CD8-positive, alpha-beta T cell (primary cell): ENCODE measurements at regions of chr2 and their contacts with region 1.

Region 1: GRCh38 chr2:201182650-201183364 is at the start of gene CASP10:
- DNase-seq: peak in 5 of 9 experiments; percentile 17 to 89 (median 23)
- ATAC-seq: peak; percentile 87
- H3K4me3 ChIP-seq: peak within 1 kb of the TSS; percentile 57 to 60
- H3K4me3 Mint-ChIP-seq: peak within 1 kb of the TSS; percentile 94
- H3K27ac ChIP-seq: peak within 1 kb of the TSS; percentile 58 to 78
- H3K27ac Mint-ChIP-seq: peak within 1 kb of the TSS; percentile 95
- H3K4me1 ChIP-seq: peaks cover 25% of the 10 kb centered on the region
- H3K4me1 Mint-ChIP-seq: peaks cover 45% of the 10 kb centered on the region
- H3K27me3 ChIP-seq: no peaks in the 10 kb centered on the region
- H3K27me3 Mint-ChIP-seq: no peaks in the 10 kb centered on the region
- CTCF ChIP-seq: peak; percentile 48
- total RNA-seq, gene CASP10: 9.8 to 10.4 TPM

Region 2: DNA sequence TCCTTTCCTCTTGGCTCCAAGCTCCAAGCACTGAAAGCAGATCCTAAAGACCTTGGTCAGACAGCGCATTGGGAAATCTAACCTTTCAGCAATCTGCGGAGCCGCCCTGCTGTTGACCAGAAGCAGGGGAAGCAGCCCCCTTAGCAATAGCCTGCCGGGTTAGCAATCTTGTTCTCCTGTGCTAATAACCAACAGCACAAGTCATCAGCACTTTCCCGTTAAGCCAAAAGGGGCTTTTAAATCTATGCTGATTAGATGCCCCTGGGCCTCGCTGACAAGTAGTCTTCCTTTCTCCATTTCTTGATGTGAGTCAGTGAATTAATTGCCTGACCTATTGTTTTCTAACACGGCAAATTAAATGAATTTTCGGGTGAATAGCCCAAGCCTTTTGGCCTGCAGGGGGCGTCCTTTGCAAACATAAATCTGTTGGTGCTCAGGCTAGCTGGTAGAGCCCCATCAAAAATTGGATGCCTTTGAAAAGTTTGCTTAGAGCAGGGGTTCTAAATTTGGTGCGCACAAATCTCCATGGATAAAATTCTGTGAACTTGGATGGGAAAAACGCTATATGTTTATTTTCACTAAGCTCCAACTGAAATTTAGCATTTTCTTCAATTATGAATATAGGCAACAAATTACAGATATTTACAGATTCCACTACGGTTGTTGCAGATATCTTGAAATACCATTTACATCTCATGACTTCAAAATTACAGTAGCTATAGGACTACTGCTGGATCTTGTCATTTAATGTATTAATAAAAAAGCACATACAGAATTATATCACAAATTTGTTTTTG is 1202.8 kb before region 1 on chr2:
- CTCF ChIA-PET with region 1: no interaction called
- POLR2A ChIA-PET with region 1: no interaction called
- intact Hi-C with region 1: loop called in 1 of 2 experiments (anchors 2 kb)
- DNase-seq: peak; percentile 69 to 90 (median 78)
- ATAC-seq: peak; percentile 75
- H3K4me3 ChIP-seq: no peak overlapping the region
- H3K4me3 Mint-ChIP-seq: no peak overlapping the region
- H3K27ac ChIP-seq: no peak overlapping the region
- H3K27ac Mint-ChIP-seq: no peak overlapping the region
- H3K4me1 ChIP-seq: no peaks in the 10 kb centered on the region
- H3K4me1 Mint-ChIP-seq: peaks cover 2% of the 10 kb centered on the region
- H3K27me3 ChIP-seq: no peaks in the 10 kb centered on the region
- H3K27me3 Mint-ChIP-seq: no peaks in the 10 kb centered on the region
- CTCF ChIP-seq: peak; percentile 77

Region 3: DNA sequence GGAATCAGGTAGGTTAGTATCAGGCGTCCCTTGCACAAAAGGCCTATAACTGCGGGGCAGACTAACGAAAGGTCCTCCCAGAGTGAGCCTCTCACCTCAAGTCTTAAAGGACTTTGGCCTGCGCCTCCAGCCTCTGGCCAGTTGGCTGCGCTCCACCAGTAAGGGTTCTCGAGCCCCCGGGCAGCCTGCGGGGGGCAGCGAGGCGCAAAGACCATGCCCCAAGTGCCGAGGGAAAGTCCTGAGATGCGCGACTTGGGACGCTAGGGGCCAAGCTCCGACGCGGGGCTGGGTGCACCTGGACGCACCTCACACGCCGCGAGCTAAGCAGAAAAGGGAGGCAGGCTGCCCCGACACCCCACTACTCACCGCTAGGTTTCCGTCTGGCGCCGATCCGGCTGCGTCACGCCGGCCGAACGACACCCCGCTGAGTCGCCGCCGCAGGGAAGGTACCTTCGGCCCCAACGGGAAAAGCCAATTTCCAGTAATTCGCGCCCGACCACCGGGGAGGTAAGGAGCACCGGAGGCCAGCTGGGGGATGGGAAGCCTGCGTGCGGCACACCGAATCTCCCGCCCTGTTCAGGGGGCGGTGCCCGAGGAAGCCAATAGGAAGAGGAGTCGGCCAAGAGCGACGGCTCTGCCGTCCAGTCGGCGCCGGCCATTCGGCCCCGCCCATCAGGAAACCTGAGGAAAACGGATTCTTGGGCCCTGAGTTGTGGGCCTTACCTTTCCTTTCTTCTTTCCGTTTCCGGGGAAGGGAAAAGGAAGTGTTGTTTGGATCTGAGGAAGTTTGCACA is 219.5 kb before region 1 on chr2 and contains the start of gene ORC2:
- CTCF ChIA-PET with region 1: interaction called, 6 read pairs
- POLR2A ChIA-PET with region 1: no interaction called
- intact Hi-C with region 1: loop called in 1 of 2 experiments (anchors 2 kb)
- DNase-seq: peak; percentile 84 to 96 (median 93)
- ATAC-seq: peak; percentile 94
- H3K4me3 ChIP-seq: peak within 1 kb of the TSS; percentile 70 to 90
- H3K4me3 Mint-ChIP-seq: peak within 1 kb of the TSS; percentile 99
- H3K27ac ChIP-seq: peak within 1 kb of the TSS; percentile 76 to 90
- H3K27ac Mint-ChIP-seq: peak within 1 kb of the TSS; percentile 99
- H3K4me1 ChIP-seq: peaks cover 30% of the 10 kb centered on the region
- H3K4me1 Mint-ChIP-seq: peaks cover 57% of the 10 kb centered on the region
- H3K27me3 ChIP-seq: no peaks in the 10 kb centered on the region
- H3K27me3 Mint-ChIP-seq: no peaks in the 10 kb centered on the region
- CTCF ChIP-seq: peak; percentile 51
- total RNA-seq, gene ORC2: 17.7 to 21.3 TPM

Region 4: GRCh38 chr2:201194097-201194496 is 11.3 kb after region 1 on chr2:
- CTCF ChIA-PET with region 1: interaction called, 42 read pairs
- POLR2A ChIA-PET with region 1: interaction called, 9 read pairs
- intact Hi-C with region 1: loop called in 1 of 2 experiments (anchors 1 kb)
- DNase-seq: peak in 2 of 9 experiments; percentile 32 to 55
- ATAC-seq: peak; percentile 55
- H3K4me3 ChIP-seq: peak overlapping the region in 1 of 2 experiments; percentile 10
- H3K4me3 Mint-ChIP-seq: peak overlapping the region; percentile 67
- H3K27ac ChIP-seq: peak overlapping the region; percentile 1 to 63
- H3K27ac Mint-ChIP-seq: peak overlapping the region; percentile 87
- H3K4me1 ChIP-seq: peaks cover 65% of the 10 kb centered on the region
- H3K4me1 Mint-ChIP-seq: peaks cover 73% of the 10 kb centered on the region
- H3K27me3 ChIP-seq: no peaks in the 10 kb centered on the region
- H3K27me3 Mint-ChIP-seq: no peaks in the 10 kb centered on the region
- CTCF ChIP-seq: no peak

Region 5: DNA sequence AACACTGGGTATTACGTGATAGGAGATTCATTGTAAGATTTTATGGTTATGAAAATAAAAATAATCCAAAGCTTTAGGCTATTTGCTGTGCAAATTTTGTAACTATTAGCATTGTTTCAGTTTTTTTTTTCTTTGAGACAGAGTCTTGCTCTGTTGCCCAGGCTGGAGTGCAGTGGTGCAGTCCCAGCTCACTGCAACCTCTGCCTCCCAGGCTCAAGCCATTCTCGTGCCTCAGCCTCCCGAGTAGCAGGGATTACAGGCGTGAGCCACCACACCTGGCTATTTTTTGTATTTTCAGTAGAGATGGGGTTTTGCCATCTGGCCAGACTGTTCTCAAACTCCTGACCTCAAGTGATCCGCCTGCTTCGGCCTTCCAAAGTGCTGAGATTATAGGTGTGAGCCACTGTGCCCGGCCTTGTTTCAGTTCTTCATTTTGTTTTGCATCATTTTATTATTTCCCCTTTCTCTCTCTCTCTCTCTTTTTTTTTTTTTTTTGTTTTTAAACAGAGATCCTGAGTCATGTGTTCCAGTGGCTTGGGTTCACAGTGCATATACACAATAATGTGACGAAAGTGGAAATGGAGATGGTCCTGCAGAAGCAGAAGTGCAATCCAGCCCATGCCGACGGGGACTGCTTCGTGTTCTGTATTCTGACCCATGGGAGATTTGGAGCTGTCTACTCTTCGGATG is 25.9 kb after region 1 on chr2:
- CTCF ChIA-PET with region 1: interaction called, 7 read pairs
- POLR2A ChIA-PET with region 1: interaction called, 3 read pairs
- intact Hi-C with region 1: loop called in 1 of 2 experiments (anchors 2 kb)
- DNase-seq: peak in 1 of 9 experiments; percentile 41
- ATAC-seq: no peak
- H3K4me3 ChIP-seq: no peak overlapping the region
- H3K4me3 Mint-ChIP-seq: no peak overlapping the region
- H3K27ac ChIP-seq: no peak overlapping the region
- H3K27ac Mint-ChIP-seq: peak overlapping the region; percentile 23
- H3K4me1 ChIP-seq: peaks cover 16% of the 10 kb centered on the region
- H3K4me1 Mint-ChIP-seq: peaks cover 39% of the 10 kb centered on the region
- H3K27me3 ChIP-seq: no peaks in the 10 kb centered on the region
- H3K27me3 Mint-ChIP-seq: no peaks in the 10 kb centered on the region
- CTCF ChIP-seq: no peak

Region 6: DNA sequence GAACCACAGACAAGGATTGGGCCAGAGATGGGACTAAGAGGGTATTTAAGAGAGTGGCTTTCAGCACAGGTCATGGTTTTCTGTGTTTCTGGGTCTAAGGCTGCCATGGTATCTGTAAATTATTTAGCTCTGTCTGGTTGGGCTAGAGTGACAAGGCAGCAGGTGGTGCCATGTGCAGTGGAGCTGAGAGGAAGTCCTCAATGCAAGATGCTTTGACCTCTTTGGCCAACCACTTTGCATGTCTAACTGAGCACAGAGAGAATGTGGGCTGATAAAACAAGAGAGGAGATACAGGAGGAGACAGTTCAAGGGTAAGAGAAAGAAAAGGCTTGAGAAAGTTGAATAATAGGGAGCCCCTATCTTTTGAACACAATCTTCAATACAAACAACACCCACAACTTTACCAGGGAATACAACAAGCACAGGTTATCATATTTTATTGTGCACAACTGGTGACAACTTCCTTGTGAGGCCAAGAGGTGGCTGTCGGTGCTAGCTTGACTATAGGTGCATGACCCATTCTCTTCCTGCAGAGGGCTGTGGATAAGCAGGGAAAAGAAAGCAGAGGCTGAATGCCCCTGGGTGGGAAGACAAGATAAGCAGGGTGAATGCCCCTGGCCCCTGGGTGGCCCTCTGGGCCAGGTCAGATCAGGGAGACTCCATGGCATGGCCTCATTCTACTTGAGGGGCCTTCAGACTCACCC is 162.0 kb after region 1 on chr2:
- CTCF ChIA-PET with region 1: no interaction called
- POLR2A ChIA-PET with region 1: no interaction called
- intact Hi-C with region 1: no loop called
- DNase-seq: no peak
- ATAC-seq: no peak
- H3K4me3 ChIP-seq: no peak overlapping the region
- H3K4me3 Mint-ChIP-seq: no peak overlapping the region
- H3K27ac ChIP-seq: no peak overlapping the region
- H3K27ac Mint-ChIP-seq: no peak overlapping the region
- H3K4me1 ChIP-seq: no peaks in the 10 kb centered on the region
- H3K4me1 Mint-ChIP-seq: peaks cover 6% of the 10 kb centered on the region
- H3K27me3 ChIP-seq: no peaks in the 10 kb centered on the region
- H3K27me3 Mint-ChIP-seq: no peaks in the 10 kb centered on the region
- CTCF ChIP-seq: no peak

Region 7: DNA sequence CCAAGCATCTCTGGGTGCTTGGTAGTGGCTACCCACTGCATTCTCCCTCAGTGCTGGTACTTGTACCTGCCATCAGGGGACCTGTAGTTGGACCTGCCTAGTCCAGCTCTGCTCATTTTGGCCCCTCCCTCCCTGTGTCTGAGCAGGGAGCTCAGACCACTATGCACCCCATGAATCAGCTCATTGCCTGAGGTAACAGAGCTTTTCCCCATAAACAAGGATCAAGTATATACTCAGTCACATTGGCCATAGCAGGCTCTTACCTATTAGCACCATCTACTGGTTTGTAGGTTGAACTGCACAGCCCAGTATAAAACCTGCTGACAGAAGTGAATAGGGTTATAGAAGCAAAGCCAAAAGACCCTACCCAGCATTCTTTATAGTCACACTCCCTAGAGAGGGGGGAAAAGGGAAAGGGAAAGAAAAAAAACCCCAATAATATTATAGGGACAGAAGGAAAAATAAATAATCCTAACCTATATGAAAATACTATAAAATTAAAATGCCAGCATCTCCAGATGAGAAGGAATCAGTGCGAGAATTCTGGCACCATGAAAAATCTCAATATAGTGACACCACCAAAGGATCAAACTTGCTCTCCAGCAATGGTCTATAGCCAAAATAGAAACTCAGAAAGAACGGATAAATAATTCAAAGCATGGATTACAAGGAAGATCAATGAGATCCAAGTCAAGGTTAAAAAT is 181.2 kb after region 1 on chr2:
- CTCF ChIA-PET with region 1: interaction called, 17 read pairs
- POLR2A ChIA-PET with region 1: no interaction called
- intact Hi-C with region 1: loop called (anchors 1 to 2 kb)
- DNase-seq: peak in 5 of 9 experiments; percentile 12 to 75 (median 60)
- ATAC-seq: peak; percentile 98
- H3K4me3 ChIP-seq: no peak overlapping the region
- H3K4me3 Mint-ChIP-seq: no peak overlapping the region
- H3K27ac ChIP-seq: no peak overlapping the region
- H3K27ac Mint-ChIP-seq: peak overlapping the region; percentile 37
- H3K4me1 ChIP-seq: peaks cover 31% of the 10 kb centered on the region
- H3K4me1 Mint-ChIP-seq: peaks cover 34% of the 10 kb centered on the region
- H3K27me3 ChIP-seq: no peaks in the 10 kb centered on the region
- H3K27me3 Mint-ChIP-seq: no peaks in the 10 kb centered on the region
- CTCF ChIP-seq: peak; percentile 87